Activated CD4-positive, alpha-beta memory T cell treated with anti-CD3 and anti-CD28 coated beads for 36 hours (primary cell): ENCODE measurements at regions of chr16 and their contacts with region 1.

Region 1: DNA sequence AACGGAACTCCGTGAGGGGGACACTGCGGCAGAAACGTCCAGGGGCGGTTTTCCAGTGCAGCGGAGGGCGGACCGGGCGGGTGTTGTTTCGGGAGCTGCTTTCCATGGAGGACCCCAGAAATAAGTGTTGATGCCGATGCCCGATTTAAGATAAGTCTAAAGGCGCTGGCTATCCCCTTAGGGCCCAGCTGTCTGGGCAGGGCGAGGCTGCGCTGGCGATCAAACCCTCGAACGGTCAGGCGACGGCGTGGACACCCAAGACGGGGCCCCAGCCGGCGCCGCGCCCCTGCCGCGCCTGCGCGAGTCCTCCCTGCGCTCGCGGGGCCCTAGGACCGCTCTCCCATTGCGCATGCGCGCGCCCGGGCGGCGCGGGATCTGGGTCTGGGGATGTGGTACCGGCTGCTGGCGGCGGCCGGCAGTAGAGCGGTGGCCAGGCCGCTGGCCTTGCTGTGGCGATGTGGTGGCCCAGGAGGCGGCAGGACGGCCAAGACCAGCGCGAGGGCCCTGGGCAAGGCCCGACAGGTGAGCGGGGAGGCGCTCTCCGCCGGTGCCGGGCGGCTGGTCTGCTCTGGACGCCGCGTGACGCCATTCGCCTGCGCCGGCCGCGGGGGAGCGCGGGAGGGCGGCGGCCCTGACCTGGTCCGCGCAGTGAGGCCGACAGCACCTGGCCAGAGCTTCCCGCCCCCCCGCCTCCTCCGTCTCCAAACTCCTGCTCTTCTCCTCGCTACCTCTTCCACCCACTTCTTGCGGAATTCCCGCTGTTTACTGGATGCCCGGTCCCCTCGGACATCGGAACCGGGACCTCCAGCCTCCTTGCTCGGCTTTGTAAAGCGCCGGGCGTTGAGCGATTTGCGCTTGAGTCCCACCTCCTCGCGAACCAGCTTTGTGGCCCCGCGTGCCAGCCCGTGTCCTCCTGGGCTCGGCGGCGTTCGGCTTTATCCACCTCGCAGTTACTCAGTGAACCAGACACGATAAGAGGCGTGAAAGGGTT is 24.0 kb downstream of the DEF8 start:
- DNase-seq: peak; percentile 92
- H3K4me3 Mint-ChIP-seq: peak overlapping the region; percentile 95
- H3K27ac Mint-ChIP-seq: peak overlapping the region; percentile 93
- H3K4me1 Mint-ChIP-seq: peaks cover 40% of the 10 kb centered on the region
- H3K27me3 Mint-ChIP-seq: no peaks in the 10 kb centered on the region

Region 2: GRCh38 chr16:89678258-89678657 is 294.3 kb before region 1 on chr16:
- CTCF ChIA-PET with region 1: no interaction called
- POLR2A ChIA-PET with region 1: no interaction called
- intact Hi-C with region 1: no loop called
- DNase-seq: no peak
- H3K4me3 Mint-ChIP-seq: no peak overlapping the region
- H3K27ac Mint-ChIP-seq: no peak overlapping the region
- H3K4me1 Mint-ChIP-seq: no peaks in the 10 kb centered on the region
- H3K27me3 Mint-ChIP-seq: no peaks in the 10 kb centered on the region

Region 3: DNA sequence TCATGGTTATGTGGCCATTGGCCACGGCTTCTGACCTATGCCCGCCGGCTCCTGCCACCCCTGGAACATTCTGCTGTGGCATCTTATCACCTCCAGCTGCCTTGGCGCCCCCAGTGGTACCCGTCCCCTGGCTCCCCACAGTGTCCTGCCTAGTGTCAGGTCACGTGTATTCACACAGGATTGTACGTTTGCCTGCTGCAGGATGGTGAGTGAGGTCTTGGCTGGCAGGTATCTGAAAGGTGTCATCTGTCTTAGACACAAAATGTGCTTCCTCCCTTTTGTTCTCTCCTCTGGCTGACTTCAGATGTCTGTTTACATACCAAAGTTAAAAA is 21.8 kb after region 1 on chr16:
- CTCF ChIA-PET with region 1: no interaction called
- POLR2A ChIA-PET with region 1: no interaction called
- intact Hi-C with region 1: loop called (anchors 2 kb)
- DNase-seq: no peak
- H3K4me3 Mint-ChIP-seq: peak overlapping the region; percentile 61
- H3K27ac Mint-ChIP-seq: peak overlapping the region; percentile 94
- H3K4me1 Mint-ChIP-seq: peaks cover 18% of the 10 kb centered on the region
- H3K27me3 Mint-ChIP-seq: peaks cover 12% of the 10 kb centered on the region